GM23248 (cell line): ENCODE measurements at regions of chr9 and their contacts with region 1.

Region 1: GRCh38 chr9:1829719-1830118 is 185.4 kb upstream of the SMARCA2 start:
- DNase-seq: no peak
- H3K4me3 ChIP-seq: no peak overlapping the region
- H3K27ac ChIP-seq: no peak overlapping the region
- H3K4me1 ChIP-seq: no peaks in the 10 kb centered on the region
- H3K27me3 ChIP-seq: no peaks in the 10 kb centered on the region

Region 2: GRCh38 chr9:1875921-1876448 is 46.3 kb after region 1 on chr9:
- in situ Hi-C with region 1: loop called (anchors 5 kb)
- DNase-seq: no peak
- H3K4me3 ChIP-seq: no peak overlapping the region
- H3K27ac ChIP-seq: no peak overlapping the region
- H3K4me1 ChIP-seq: no peaks in the 10 kb centered on the region
- H3K27me3 ChIP-seq: 0 out of 2 replicates have a peak, but pooled peaks cover 2% of the 10 kb centered on the region